H1 (cell line): ENCODE measurements at regions of chr3 and their contacts with region 1.

Region 1: GRCh38 chr3:123421353-123422174 is 27.3 kb downstream of the ADCY5 start:
- DNase-seq: no peak
- H3K4me3 ChIP-seq: no peak overlapping the region
- H3K27ac ChIP-seq: no peak overlapping the region
- H3K4me1 ChIP-seq: no peaks in the 10 kb centered on the region; a peak in 2 of 7 replicates
- H3K27me3 ChIP-seq: no peaks in the 10 kb centered on the region
- CTCF ChIP-seq: no peak
- EP300 ChIP-seq: no peak
- POLR2A ChIP-seq: no peak
- RAD21 ChIP-seq: no peak

Region 2: GRCh38 chr3:123431658-123432324 is 10.2 kb after region 1 on chr3:
- CTCF ChIA-PET with region 1: interaction called, 12 read pairs
- POLR2A ChIA-PET with region 1: interaction called, 3 read pairs
- DNase-seq: no peak
- H3K4me3 ChIP-seq: no peak overlapping the region
- H3K27ac ChIP-seq: no peak overlapping the region
- H3K4me1 ChIP-seq: no peaks in the 10 kb centered on the region
- H3K27me3 ChIP-seq: no peaks in the 10 kb centered on the region
- CTCF ChIP-seq: no peak
- EP300 ChIP-seq: no peak
- POLR2A ChIP-seq: no peak
- RAD21 ChIP-seq: no peak

Region 3: DNA sequence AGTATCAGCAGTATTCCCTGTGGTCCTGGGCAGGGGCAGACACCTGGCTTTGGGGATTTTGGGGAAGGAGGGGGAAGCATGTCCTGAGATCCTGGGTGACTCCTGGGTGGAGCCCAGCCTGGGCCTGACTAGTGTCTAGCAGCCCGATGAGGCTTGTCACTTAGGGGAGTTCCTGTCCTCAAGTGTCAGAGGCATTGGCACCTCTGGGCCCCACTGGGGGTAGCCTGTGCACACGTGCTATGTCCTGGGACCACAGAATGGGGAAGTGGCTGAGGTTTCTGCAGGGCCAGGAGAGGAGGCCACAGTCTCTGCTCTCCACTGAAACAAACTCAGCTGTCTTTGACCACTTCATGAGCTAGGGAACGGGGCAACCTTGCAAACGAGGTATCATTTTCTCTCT is 58.9 kb after region 1 on chr3:
- CTCF ChIA-PET with region 1: interaction called, 10 read pairs
- POLR2A ChIA-PET with region 1: no interaction called
- DNase-seq: no peak
- H3K4me3 ChIP-seq: no peak overlapping the region
- H3K27ac ChIP-seq: no peak overlapping the region
- H3K4me1 ChIP-seq: no peaks in the 10 kb centered on the region
- H3K27me3 ChIP-seq: no peaks in the 10 kb centered on the region; a peak in 1 of 7 replicates
- CTCF ChIP-seq: no peak
- EP300 ChIP-seq: no peak
- POLR2A ChIP-seq: no peak
- RAD21 ChIP-seq: no peak